Panc1 (cell line): ENCODE measurements at regions of chr7 and their contacts with region 1.

Region 1: DNA sequence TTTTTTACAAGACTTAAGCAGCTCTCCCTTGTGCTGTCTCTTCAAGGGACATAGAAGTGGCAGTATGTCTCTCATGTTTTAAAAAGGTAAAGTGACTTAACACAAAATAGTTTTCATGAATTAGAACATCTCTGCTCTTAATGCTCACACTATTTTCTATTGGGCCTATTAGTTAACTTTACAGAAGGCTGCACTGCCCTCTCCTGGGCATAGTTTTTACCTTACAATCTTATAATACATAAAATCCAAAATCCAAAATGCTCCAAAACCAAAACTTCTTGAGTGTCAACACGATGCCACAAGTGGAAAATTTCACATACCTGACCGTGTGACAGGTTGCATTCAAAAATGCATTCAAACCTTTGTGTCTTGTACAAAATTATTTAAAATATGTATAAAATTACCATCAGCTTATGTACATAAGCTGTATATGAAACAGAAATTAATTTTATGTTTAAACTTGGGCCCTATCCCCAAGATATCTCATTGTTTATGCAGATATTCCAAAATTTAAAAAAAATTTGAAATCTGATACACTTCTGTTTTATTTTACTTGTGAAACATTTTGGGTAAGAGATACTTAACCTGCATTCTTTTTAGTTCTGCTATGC is 25.8 kb downstream of the TES start:
- DNase-seq: no peak
- ATAC-seq: peak; percentile 68
- H3K4me3 ChIP-seq: no peak overlapping the region
- H3K27ac ChIP-seq: no peak overlapping the region
- H3K4me1 ChIP-seq: peaks cover 19% of the 10 kb centered on the region
- H3K27me3 ChIP-seq: no peaks in the 10 kb centered on the region
- CTCF ChIP-seq: peak; percentile 64; the same call in 1 of the 2 replicates

Region 2: DNA sequence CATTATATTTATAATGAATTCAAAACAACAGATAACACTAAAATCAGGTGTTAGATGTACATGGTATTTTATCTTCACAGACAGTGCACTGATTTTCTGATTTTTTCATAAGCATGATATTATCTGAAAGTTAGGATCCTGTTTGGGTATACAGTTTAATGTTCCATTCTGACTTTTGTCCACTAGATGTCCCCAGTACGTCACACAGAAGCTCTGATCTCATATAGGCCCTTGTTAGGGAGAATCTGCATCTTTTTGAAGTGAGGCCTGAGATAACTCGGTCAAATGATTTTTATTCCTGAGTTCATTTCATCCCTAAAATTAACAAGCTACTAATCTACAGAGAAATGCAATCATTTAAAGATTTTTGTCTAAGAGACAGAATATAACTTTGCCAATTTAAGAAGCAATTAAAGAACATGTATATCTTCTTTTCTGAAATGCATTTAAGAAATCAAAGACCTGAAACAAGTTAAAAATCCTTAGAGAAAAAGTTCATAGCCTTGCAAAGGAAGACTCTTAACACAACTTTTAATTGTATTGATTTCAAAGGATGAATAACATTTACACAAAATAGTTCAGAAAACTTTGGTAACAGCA is 97.8 kb before region 1 on chr7:
- CTCF ChIA-PET with region 1: no interaction called
- POLR2A ChIA-PET with region 1: no interaction called
- in situ Hi-C with region 1: no loop called
- intact Hi-C with region 1: loop called (anchors 1 kb)
- DNase-seq: peak; percentile 65
- ATAC-seq: peak; percentile 94
- H3K4me3 ChIP-seq: no peak overlapping the region
- H3K27ac ChIP-seq: peak overlapping the region; percentile 42; the same call in 1 of the 2 replicates
- H3K4me1 ChIP-seq: peaks cover 13% of the 10 kb centered on the region
- H3K27me3 ChIP-seq: no peaks in the 10 kb centered on the region; the same call in 1 of the 2 replicates
- CTCF ChIP-seq: peak; percentile 82; the same call in 1 of the 2 replicates

Region 3: DNA sequence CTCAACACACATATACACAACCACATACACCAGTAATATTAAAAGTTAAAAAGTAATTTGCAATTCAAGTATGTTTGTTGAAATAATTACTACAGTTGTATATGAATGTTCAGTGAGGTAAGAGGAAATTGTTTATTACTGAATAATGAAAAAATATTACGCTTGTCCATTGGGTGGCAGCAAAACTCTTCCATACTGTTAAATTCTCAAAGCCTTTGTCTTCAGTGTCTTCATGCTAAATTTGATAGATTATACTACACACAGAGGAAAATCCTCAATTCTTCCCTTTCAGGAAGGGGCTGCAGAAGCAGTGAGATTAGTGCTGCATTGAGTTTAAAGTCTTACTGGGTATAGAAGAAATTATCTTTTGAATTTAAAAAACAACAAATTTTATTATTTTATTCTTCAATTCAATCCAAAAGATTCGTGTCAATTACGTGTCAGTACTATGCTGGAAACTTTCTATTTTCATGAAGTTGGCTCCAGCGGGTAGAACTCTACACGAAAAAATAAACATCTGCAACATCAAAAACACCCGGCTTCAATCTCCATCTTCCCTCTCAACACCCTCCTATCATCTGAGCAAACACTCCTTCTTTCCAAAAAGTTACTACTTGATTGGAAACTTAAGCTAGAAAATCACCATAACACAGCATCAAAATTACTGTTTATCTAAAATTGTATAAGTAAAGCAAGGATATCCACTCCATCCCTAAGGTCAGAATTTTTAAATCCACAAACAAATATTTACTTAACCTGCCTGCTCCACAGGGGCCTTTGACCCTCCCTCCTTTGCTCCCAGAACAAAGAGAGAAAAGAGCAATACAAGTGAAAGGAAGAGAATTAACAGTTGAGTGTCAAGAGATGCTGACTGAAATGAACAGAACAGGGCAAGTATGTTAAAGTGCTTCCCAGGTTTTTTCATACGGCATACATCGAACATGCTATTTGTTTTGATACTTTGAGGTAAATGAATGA is 62.8 kb before region 1 on chr7:
- CTCF ChIA-PET with region 1: interaction called, 4 read pairs
- POLR2A ChIA-PET with region 1: no interaction called
- in situ Hi-C with region 1: no loop called
- intact Hi-C with region 1: loop called (anchors 2 kb)
- DNase-seq: peak; percentile 80
- ATAC-seq: peak; percentile 68
- H3K4me3 ChIP-seq: no peak overlapping the region
- H3K27ac ChIP-seq: peak overlapping the region; percentile 73; the same call in 1 of the 2 replicates
- H3K4me1 ChIP-seq: peaks cover 15% of the 10 kb centered on the region
- H3K27me3 ChIP-seq: peaks cover 2% of the 10 kb centered on the region; the same call in 1 of the 2 replicates
- CTCF ChIP-seq: peak; percentile 60; the same call in 1 of the 2 replicates

Region 4: DNA sequence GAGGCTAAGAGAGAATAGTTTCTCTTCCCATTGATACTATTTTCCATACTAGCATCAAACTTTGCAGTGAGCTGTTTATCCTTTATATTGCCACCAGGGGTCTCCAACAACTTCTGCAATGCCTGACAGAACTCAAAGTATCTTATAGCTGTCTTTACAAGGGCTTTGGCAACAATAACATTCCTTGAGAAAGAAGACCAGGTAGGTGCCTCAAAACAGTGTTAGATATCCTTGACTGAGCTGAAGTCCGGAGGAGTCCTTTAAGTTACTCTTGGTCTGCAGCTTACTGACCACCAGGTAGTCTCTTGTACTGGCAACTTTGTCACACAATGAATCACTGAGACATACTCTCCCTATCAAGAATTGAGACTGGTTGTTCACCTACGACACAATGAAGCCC is 55.8 kb before region 1 on chr7:
- CTCF ChIA-PET with region 1: interaction called, 29 read pairs
- POLR2A ChIA-PET with region 1: no interaction called
- in situ Hi-C with region 1: no loop called
- intact Hi-C with region 1: loop called (anchors 1 kb)
- DNase-seq: peak; percentile 73
- ATAC-seq: peak; percentile 90
- H3K4me3 ChIP-seq: no peak overlapping the region
- H3K27ac ChIP-seq: peak overlapping the region; percentile 67; the same call in 1 of the 2 replicates
- H3K4me1 ChIP-seq: peaks cover 3% of the 10 kb centered on the region; the same call in 1 of the 2 replicates
- H3K27me3 ChIP-seq: no peaks in the 10 kb centered on the region
- CTCF ChIP-seq: peak; percentile 79

Region 5: DNA sequence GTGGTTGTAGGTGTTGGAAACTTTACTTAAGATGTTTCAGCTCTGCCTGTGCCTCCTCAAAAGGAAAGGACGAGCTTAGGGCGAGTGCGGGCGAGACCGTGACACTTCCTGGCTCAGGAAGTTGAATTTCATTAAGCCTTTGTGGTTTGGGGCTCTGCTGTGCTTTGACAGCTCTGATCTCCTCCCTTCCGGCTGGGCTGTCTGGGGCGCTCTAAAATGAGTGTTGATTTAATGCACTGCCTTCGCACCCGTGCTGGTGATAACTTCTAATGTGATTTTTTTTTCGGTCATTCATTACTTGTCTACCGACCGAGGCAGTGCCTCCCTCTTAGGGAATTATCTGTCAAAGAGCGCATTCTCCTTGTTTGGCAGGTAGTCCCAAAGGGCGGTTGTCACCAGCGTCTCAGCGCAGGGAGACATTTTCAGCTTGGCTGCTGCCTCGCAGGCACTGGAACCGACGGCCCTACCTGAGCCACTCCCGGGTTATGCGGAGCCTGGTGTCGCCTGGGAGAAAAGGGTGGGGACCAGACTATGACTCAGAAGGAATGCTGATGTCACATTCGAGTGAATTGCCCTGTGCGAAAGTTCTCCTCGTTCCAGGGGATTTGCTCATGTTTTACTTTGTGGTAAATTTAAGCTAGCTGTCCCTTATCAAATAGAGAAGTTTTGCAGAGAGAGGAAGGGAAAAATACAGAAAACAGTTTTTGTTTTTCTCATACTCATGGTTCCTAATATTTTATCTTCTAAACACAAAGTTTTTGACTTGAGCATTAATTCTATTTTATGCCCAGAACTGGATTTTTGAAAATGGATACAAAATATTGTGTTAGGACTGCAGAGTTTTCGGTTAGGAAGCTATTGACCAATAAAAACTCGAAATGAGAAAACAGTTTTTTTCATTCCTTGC is 24.9 kb before region 1 on chr7:
- CTCF ChIA-PET with region 1: no interaction called
- POLR2A ChIA-PET with region 1: interaction called, 12 read pairs
- in situ Hi-C with region 1: no loop called
- intact Hi-C with region 1: no loop called
- DNase-seq: peak; percentile 96
- ATAC-seq: peak; percentile 86
- H3K4me3 ChIP-seq: peak overlapping the region; percentile 66 to 93
- H3K27ac ChIP-seq: peak overlapping the region; percentile 90
- H3K4me1 ChIP-seq: peaks cover 49% of the 10 kb centered on the region
- H3K27me3 ChIP-seq: no peaks in the 10 kb centered on the region
- CTCF ChIP-seq: no peak

Region 6: DNA sequence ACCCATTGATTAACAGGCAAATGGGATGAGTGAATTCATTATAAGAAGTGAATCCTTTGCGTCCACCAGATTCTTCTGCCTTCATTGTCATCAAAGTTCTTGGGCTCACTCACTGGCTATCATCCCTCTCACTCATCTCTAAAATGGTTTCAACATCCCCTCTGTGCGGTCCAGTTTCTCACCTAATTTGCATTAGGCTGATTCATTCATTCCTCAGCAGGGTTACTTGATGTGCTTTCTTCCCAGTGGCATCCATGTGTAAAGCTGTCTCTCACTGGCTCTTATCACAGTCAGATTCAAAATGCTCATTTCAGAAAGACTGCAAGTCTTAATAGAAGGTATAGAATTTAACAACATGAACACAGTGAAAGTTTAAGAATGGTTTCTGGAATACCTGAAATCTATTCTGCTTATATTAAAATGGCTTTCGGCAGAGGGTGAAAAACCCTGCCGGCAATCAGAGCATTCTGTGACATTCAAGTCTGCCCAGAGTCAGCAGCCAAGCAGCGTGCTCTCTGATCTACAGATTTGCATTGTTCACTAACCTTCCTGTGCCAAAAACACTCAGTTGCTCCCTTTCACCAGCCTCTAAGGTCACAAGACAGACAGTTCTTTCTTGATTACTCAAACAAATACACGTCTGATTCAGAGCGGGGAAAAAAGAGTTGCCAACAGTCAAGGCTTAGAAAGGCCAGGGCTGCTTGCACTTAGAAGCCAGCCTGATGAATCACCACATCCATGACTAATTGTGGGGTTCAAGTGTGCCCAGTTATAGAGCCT is 80.9 kb after region 1 on chr7:
- CTCF ChIA-PET with region 1: no interaction called
- POLR2A ChIA-PET with region 1: no interaction called
- in situ Hi-C with region 1: no loop called
- intact Hi-C with region 1: no loop called
- DNase-seq: peak; percentile 99
- ATAC-seq: peak; percentile 97
- H3K4me3 ChIP-seq: peak overlapping the region; percentile 1 to 17; a peak in 3 of 4 replicates
- H3K27ac ChIP-seq: peak overlapping the region; percentile 97
- H3K4me1 ChIP-seq: peaks cover 29% of the 10 kb centered on the region
- H3K27me3 ChIP-seq: no peaks in the 10 kb centered on the region
- CTCF ChIP-seq: no peak